ENCODE measurements at regions of chr2 and their contacts with region 1.

Region 1: GRCh38 chr2:20661067-20661980 is 5.6 kb upstream of the GDF7 start:
- H3K4me3 ChIP-seq: no peak overlapping the region
- H3K27ac ChIP-seq: no peak overlapping the region
- H3K4me1 ChIP-seq: no peaks in the 10 kb centered on the region
- CTCF ChIP-seq: peak; percentile 86

Region 2: GRCh38 chr2:20525041-20526035 is 136.0 kb before region 1 on chr2:
- CTCF ChIA-PET with region 1: no interaction called
- POLR2A ChIA-PET with region 1: no interaction called
- H3K4me3 ChIP-seq: no peak overlapping the region
- H3K27ac ChIP-seq: no peak overlapping the region
- H3K4me1 ChIP-seq: no peaks in the 10 kb centered on the region
- CTCF ChIP-seq: no peak

Region 3: DNA sequence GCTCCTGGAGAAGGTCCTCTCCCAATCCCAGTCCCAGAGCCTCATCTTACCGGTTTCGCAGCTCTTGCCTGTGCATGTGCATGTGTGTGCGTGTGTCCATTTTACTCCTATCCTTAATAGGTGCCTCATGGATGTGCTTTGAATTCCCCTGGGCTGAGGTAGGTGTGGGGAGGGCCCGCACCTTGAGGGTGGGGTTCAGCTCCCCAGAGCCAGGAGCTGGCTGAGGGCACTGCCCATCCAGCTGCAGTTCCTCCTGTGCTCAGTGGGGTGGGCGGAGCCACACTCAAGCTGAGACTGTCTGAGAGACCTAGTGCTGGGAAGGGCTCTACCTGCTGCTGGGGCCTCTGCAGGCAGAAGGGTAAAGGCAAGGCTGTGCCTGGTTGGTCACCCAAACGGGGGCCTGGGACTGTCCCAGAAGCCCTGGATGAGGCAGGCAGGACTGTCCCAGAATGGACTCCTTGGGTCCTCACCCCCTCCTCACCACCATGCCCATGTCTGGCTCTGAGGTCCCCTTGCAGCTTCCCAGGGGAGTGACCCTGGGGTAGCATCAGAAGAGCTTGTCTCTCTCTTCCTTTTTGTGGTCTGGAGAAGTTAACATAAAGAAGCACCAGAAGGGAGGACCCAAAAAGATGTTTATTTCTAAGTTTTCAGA is 14.5 kb after region 1 on chr2:
- CTCF ChIA-PET with region 1: interaction called, 60 read pairs
- POLR2A ChIA-PET with region 1: interaction called, 6 read pairs
- H3K4me3 ChIP-seq: no peak overlapping the region
- H3K27ac ChIP-seq: no peak overlapping the region
- H3K4me1 ChIP-seq: no peaks in the 10 kb centered on the region
- CTCF ChIP-seq: peak; percentile 11; the same call in 1 of the 2 replicates

Region 4: GRCh38 chr2:20916604-20917286 is 255.4 kb after region 1 on chr2:
- CTCF ChIA-PET with region 1: interaction called, 15 read pairs
- POLR2A ChIA-PET with region 1: no interaction called
- H3K4me3 ChIP-seq: no peak overlapping the region
- H3K27ac ChIP-seq: no peak overlapping the region
- H3K4me1 ChIP-seq: no peaks in the 10 kb centered on the region
- CTCF ChIP-seq: no peak

Region 5: GRCh38 chr2:20970068-20970467 is 308.7 kb after region 1 on chr2:
- CTCF ChIA-PET with region 1: interaction called, 147 read pairs
- POLR2A ChIA-PET with region 1: no interaction called
- H3K4me3 ChIP-seq: no peak overlapping the region
- H3K27ac ChIP-seq: no peak overlapping the region
- H3K4me1 ChIP-seq: no peaks in the 10 kb centered on the region
- CTCF ChIP-seq: no peak

Region 6: DNA sequence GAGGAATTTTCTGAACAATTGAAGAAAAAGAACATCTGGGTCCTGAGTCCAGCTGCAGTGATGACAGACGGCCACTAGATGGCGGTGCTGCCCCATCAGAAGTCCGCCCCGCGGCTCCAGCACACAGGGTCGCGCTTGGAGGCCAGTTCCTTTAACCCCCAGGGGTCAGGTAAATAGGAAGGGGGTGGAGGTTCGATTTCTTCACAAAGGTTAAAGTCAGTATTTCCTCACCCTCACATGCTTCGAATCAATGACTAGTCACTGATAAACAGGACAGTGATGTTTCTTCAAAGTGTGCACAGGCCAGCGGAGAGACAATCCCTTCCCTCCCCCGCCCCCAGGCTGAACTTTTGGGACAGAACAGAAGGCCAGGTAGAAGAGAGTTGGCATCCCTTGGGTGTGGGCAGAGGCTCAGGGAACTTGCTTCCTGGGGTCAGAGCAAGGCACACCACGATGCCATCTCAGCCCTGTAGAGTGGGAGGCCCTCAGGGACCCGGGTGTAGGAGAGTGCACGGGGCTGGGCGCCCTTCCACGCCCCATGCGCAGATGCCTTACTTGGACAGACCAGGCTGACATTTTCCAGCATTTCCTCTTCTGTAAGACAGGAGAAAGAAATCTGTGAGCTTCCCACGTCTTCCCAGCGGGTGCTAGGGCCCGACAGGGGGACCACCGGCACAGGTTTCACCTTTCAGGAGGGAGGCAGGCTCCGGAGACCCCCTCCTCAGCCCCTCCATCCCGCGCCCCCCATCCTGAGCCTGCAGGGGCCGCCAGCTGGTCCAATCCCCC is 381.8 kb after region 1 on chr2:
- CTCF ChIA-PET with region 1: interaction called, 12 read pairs
- POLR2A ChIA-PET with region 1: no interaction called
- H3K4me3 ChIP-seq: no peak overlapping the region
- H3K27ac ChIP-seq: no peak overlapping the region
- H3K4me1 ChIP-seq: no peaks in the 10 kb centered on the region
- CTCF ChIP-seq: peak; percentile 74